Transverse colon (tissue), 4 donors: ENCODE measurements at regions of chr12 and their contacts with region 1.

Region 1: DNA sequence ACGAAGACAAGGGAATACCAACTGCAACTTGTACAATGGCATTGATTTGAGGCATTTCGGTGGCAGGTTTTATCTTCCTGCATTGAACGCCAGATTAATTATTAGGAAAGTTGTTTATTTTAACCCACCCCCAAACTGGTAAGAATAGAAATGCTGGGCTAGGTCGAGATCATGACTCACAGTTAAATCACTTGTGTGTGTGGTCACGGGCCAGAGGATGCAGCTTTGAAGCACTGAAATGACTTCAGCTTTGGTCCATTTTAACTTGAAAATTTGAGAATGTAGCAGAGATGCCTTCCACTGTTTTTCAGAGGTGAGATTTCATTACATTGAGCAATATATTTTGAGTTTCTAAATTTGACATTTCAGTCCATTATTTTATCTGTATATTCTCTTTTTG is 23.6 kb upstream of the KCNH3 start:
- DNase-seq: no peak
- H3K4me3 ChIP-seq: no peak overlapping the region
- H3K27ac ChIP-seq: no peak overlapping the region
- H3K4me1 ChIP-seq: peaks cover 0 to 4% (median 0%) of the 10 kb centered on the region in 4 donors
- H3K27me3 ChIP-seq: no peaks in the 10 kb centered on the region
- CTCF ChIP-seq: no peak
- EP300 ChIP-seq: no peak
- POLR2A ChIP-seq: no peak

Region 2: DNA sequence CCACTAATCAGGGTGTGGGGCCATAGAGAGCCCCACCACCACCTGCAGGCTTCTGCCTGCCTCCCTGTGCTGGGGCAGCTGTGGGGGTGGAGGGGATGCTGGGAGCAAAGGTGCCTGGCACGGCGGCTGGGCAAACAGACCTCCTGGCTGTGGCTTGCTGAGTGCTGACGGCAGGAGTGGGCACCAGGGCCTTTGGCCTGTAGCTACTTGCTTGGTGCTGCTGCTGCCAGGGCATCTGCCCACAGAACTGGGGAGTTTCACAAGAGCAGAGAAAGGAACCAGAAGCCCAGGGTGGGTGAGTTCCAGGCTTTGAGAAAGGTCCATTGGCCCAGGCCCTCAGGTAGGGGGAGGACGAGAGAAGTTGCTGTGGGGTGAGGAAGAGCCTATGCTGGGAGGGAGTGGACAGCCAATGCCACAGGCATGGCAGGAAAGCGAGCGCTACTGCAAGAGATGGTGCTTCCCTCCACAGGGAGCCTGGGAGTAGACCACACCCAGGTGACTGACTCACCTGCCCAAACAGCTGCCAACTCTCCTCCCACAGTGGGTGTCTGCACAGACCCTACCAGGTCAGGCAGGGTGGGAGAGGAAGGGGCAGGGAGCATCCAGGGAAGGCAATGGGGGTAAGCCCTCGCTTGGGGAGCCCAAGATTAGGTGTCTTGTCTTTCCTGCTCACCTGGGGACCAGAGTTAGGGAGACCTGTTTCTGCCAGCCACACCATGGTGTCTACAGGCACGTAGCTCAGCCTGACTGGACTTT is 1656.6 kb before region 1 on chr12:
- in situ Hi-C with region 1: no loop called
- intact Hi-C with region 1: no loop called
- DNase-seq: no peak
- H3K4me3 ChIP-seq: no peak overlapping the region
- H3K27ac ChIP-seq: no peak overlapping the region
- H3K4me1 ChIP-seq: no peaks in the 10 kb centered on the region
- H3K27me3 ChIP-seq: no peaks in the 10 kb centered on the region
- CTCF ChIP-seq: no peak
- EP300 ChIP-seq: no peak
- POLR2A ChIP-seq: no peak

Region 3: DNA sequence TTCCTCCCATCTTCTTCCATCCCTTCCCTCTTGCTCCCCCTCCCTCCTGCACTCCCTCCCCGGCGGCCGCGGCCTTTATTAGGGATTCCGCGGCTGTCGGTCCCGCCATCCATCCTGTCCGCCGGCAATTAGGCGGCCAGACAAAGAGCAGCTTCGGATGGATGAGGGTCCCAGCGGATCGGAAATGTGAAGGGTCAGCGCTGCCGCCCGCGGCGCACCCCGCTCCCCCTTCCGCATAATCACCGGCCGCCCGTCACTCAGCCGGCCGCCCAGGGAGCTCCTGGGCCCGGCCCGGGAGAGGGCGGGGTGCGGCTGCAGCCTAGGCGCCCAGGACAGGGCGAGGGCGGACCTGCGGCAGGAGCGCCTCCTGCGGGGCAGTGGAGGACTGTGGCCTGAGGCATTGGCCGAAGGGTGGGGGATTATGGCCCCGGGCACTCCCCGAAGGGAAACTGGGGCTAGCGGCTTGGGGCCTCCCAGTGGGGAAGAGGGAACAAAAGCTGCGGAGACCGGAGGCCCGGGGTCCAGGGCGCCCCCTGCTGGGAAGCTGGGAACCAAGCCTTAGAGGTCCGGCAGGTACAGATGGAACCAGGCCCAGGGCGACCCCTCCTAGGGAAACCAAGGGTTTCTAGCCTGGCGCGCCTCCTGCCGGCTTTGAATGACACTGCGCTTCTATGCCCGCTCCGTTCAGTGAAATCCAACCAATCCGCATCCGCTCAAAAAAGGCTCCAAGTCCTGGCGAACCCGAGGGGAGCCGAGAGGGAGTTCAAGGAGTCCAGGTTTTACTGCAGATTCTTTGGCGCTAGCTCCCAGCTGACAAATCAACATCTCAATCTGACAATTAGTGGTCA is 173.0 kb before region 1 on chr12:
- in situ Hi-C with region 1: loop called in 1 of 4 experiments (anchors 10 kb)
- intact Hi-C with region 1: loop called (anchors 5 kb)
- DNase-seq: peak; percentile 88
- H3K4me3 ChIP-seq: peak overlapping the region in 3 of 4 donors; percentile 34 to 56 (median 42)
- H3K27ac ChIP-seq: peak overlapping the region in 1 of 4 donors; percentile 14
- H3K4me1 ChIP-seq: peaks cover 29 to 60% (median 46%) of the 10 kb centered on the region in 4 donors
- H3K27me3 ChIP-seq: peaks cover 77% of the 10 kb centered on the region
- CTCF ChIP-seq: peak; percentile 84 to 89 (median 86)
- EP300 ChIP-seq: no peak
- POLR2A ChIP-seq: no peak

Region 4: DNA sequence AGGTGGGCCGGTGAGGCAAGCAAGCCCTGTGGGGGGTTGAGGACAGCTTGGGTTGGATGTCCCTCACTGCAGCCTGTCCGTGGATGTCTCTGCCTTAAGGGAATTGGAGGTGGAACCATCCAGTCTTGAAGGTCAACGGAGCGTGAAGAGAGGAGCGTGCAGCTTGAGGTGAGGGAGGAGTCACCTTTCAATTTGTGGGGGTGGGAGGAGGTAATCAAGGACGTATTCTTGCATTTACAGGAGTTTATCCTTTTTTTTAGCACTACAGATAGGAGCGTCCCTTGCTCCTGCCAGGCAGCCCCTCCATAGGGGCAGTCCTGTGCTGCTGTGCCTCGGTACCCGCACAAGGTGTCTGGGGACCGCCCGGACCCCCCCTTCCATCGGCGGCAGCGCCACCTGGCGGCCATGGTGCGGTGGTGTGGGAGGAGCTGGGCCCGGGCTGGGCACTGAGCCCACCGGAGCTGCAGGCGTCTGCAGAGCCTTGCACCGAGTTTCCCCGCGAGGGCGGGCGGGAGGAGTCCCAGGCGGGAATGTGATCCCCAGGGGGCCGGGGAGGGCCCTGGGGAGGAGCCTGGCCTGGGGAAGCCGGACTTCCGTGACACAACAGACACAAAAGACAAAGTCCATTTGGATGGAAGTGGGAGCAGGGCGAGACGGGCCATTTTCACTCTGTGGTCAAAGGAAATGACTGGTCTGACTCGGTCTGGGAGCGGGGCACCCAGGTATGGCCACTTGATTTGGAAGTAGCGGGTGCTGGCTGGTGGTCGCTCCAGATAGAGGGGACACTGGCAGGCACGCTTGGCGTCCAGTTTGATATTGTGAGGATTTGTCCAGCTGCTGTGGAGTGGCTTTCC is 167.7 kb before region 1 on chr12:
- in situ Hi-C with region 1: loop called in 2 of 4 experiments (anchors 5 to 10 kb)
- intact Hi-C with region 1: loop called (anchors 5 kb)
- DNase-seq: peak; percentile 91
- H3K4me3 ChIP-seq: peak overlapping the region in 3 of 4 donors; percentile 25 to 52 (median 26)
- H3K27ac ChIP-seq: peak overlapping the region; percentile 24 to 44 (median 36)
- H3K4me1 ChIP-seq: peaks cover 37 to 61% (median 44%) of the 10 kb centered on the region in 4 donors
- H3K27me3 ChIP-seq: peaks cover 85% of the 10 kb centered on the region
- CTCF ChIP-seq: peak; percentile 93 to 97 (median 97)
- EP300 ChIP-seq: no peak
- POLR2A ChIP-seq: peak; percentile 78

Region 5: DNA sequence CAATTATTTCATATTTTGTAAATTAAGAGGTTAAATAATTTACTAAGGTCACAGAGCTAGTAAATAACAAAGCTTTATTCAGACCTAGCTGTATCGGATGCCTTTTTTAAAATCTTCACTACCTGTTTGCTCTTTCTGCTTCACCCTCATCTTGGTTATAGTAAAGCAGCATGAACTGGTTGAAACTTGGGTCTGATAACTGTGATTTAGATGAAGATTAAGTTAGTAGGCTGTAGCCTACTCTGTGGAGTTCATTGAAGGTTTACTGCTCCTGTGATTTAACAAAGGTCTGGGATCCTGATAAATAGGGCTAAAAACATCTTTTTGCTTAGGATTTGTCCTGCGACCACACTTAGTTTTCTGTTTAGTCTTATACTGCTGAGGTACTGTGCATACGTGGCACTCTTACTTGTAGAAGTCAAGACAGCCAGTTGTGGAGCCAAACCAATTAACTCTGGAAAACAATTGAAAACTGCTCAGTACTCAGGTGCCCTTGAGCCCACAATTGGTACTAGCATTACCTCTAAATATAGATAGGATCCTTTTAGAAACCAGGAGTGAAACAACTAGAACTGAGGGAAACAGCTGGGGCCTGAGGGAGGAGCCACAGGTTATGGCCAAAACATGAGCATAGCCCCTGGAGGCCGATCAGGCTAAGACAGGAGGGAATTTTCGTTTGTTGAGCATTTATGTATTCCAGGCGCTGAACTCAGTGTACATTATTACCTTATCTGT is 145.7 kb before region 1 on chr12:
- in situ Hi-C with region 1: loop called in 2 of 4 experiments (anchors 5 kb)
- intact Hi-C with region 1: no loop called
- DNase-seq: peak; percentile 63
- H3K4me3 ChIP-seq: no peak overlapping the region
- H3K27ac ChIP-seq: peak overlapping the region; percentile 15 to 99 (median 46)
- H3K4me1 ChIP-seq: peaks cover 9 to 28% (median 23%) of the 10 kb centered on the region in 4 donors
- H3K27me3 ChIP-seq: no peaks in the 10 kb centered on the region
- CTCF ChIP-seq: peak; percentile 20 to 50 (median 34)
- EP300 ChIP-seq: no peak
- POLR2A ChIP-seq: no peak

Region 6: GRCh38 chr12:49636979-49637755 is 121.9 kb after region 1 on chr12:
- in situ Hi-C with region 1: no loop called
- intact Hi-C with region 1: no loop called
- DNase-seq: peak; percentile 52
- H3K4me3 ChIP-seq: no peak overlapping the region
- H3K27ac ChIP-seq: peak overlapping the region in 3 of 4 donors; percentile 18 to 69 (median 33)
- H3K4me1 ChIP-seq: peaks cover 0 to 10% (median 8%) of the 10 kb centered on the region in 4 donors
- H3K27me3 ChIP-seq: no peaks in the 10 kb centered on the region
- CTCF ChIP-seq: peak; percentile 59 to 60 (median 60)
- EP300 ChIP-seq: no peak
- POLR2A ChIP-seq: no peak